KBM-7 (cell line): ENCODE measurements at regions of chr3 and their contacts with region 1.

Region 1: GRCh38 chr3:78659386-78659987 is 1108.3 kb downstream of the ROBO1 start:
- DNase-seq: peak; percentile 47

Region 2: DNA sequence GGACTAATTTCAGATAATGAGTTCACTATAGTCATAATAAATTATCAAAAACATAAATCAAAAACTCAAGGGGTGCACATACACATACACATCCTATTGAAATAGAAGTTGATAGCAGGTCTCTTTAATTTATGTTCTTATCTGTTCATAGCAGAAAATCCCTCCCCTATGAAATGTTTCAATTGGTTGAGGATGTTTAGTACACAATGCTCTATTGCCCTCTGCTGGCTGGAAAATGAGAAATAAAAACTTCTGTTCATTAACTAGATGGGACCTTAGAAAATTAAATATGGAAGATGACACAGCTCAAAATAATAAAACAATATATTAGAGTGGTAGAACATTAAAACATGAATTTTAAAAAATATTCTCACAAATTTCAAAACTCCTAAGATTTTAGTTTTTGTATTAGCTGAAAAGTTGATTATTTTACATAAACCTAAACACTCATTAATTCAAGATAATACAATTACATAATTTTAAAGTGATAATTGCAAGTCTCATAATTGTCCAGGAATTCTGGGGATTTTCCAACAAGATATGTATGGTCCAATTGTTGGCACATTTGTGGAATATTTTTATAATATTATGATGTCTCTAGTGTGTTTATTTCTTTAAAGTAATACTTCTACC is 373.3 kb after region 1 on chr3:
- in situ Hi-C with region 1: loop called (anchors 25 kb)
- DNase-seq: peak; percentile 49

Region 3: DNA sequence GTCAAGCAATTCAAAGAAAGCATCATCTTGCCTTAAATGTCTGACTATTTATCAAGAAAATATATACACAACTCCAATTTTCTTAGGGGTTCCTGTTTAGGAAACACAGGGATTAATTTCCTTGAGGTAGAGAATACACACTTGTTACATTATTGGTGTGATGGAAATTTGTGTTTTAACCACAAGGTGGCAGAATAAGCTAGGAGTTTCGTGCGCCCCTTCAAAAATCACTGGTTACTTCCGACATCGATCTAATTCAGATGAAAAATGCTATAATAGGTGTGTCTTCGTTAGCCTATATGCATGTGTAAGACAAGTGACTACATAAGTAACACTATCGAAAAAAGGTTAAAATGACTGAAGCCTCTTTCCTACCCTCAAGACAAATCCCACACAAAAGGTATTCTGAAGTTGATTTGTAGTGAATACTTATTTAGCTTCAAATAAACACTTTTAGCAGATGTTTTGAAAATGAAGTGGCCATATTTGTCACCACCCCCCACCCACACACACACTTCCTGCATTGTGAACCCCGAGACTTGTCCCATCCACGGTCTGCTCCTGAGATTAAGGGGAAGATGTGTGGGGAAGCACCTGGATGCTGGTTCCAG is 861.9 kb after region 1 on chr3:
- in situ Hi-C with region 1: loop called (anchors 25 kb)
- DNase-seq: peak; percentile 61